ENCODE measurements at regions of chr11 and their contacts with region 1.

Region 1: GRCh38 chr11:1694064-1694845 is 2.7 kb upstream of the KRTAP5-6 start:
- DNase-seq: peak; percentile 86 to 93
- H3K4me3 ChIP-seq: peak overlapping the region; percentile 49
- H3K4me3 Mint-ChIP-seq: peak overlapping the region; percentile 83
- H3K27ac Mint-ChIP-seq: peak overlapping the region; percentile 91
- H3K4me1 ChIP-seq: peaks cover 44% of the 10 kb centered on the region
- H3K4me1 Mint-ChIP-seq: peaks cover 34% of the 10 kb centered on the region
- H3K27me3 ChIP-seq: no peaks in the 10 kb centered on the region
- H3K27me3 Mint-ChIP-seq: no peaks in the 10 kb centered on the region
- CTCF ChIP-seq: peak; percentile 93 to 95

Region 2: GRCh38 chr11:1256257-1257045 is 437.8 kb before region 1 on chr11:
- CTCF ChIA-PET with region 1: no interaction called
- POLR2A ChIA-PET with region 1: no interaction called
- intact Hi-C with region 1: no loop called
- DNase-seq: no peak
- H3K4me3 ChIP-seq: no peak overlapping the region
- H3K4me3 Mint-ChIP-seq: no peak overlapping the region
- H3K27ac Mint-ChIP-seq: no peak overlapping the region
- H3K4me1 ChIP-seq: no peaks in the 10 kb centered on the region; the same call in 1 of the 2 replicates
- H3K4me1 Mint-ChIP-seq: no peaks in the 10 kb centered on the region
- H3K27me3 ChIP-seq: no peaks in the 10 kb centered on the region
- H3K27me3 Mint-ChIP-seq: no peaks in the 10 kb centered on the region
- CTCF ChIP-seq: no peak

Region 3: DNA sequence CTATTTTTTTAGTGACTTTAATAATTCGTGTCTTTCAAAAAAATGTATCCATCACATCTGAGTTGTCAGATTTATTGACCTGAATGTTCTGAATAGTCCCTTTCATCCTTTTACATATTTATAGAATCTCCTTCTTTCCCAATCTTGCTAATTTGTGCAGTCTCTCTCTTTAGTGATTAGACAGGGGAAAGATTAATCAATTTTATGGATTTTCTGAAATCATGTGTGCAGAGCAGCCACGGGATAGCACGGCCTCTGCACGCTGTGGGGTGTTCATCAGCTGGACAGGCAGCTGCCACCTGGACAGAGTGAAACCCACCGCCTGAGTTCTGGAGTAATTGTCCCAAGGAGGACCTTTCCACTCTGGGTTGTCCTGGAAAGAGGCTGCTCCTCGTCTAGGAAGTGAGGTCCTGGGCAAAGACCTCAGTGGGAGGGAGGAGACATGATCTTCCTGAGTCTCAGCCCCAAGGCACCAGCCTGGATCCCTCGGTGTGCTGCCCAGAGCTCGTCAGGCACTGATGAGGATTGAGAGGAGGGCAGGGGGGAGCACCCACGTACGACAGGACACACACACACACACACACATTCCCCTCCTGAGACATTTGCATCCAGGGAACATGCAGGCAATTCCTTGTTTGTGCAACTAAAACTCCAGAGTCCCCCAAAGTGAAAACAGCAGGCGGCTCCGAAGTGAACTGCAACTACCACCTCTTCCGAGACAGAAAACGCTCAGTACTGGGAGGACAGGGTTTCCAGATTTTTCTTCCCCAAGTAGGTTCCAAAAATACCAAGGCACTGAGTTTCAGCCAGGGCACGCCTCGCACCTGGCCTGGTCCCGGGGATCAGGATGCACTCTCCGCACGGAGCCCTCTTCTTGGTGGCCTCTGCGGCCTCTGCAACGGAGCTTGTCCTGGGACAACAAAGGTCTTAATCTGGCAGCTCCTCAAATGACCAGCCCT is 19.8 kb before region 1 on chr11:
- CTCF ChIA-PET with region 1: interaction called, 7 read pairs
- POLR2A ChIA-PET with region 1: no interaction called
- intact Hi-C with region 1: loop called (anchors 1 kb)
- DNase-seq: peak; percentile 52 to 72
- H3K4me3 ChIP-seq: no peak overlapping the region
- H3K4me3 Mint-ChIP-seq: peak overlapping the region; percentile 35
- H3K27ac Mint-ChIP-seq: peak overlapping the region; percentile 75
- H3K4me1 ChIP-seq: peaks cover 42% of the 10 kb centered on the region
- H3K4me1 Mint-ChIP-seq: peaks cover 38% of the 10 kb centered on the region
- H3K27me3 ChIP-seq: no peaks in the 10 kb centered on the region
- H3K27me3 Mint-ChIP-seq: no peaks in the 10 kb centered on the region
- CTCF ChIP-seq: no peak

Region 4: GRCh38 chr11:1832211-1832919 is 138.1 kb after region 1 on chr11:
- CTCF ChIA-PET with region 1: interaction called, 52 read pairs
- POLR2A ChIA-PET with region 1: interaction called, 6 read pairs
- intact Hi-C with region 1: loop called (anchors 1 kb)
- DNase-seq: peak in 1 of 2 experiments; percentile 70
- H3K4me3 ChIP-seq: no peak overlapping the region
- H3K4me3 Mint-ChIP-seq: peak overlapping the region; percentile 33
- H3K27ac Mint-ChIP-seq: peak overlapping the region; percentile 98
- H3K4me1 ChIP-seq: peaks cover 78% of the 10 kb centered on the region
- H3K4me1 Mint-ChIP-seq: peaks cover 50% of the 10 kb centered on the region
- H3K27me3 ChIP-seq: no peaks in the 10 kb centered on the region
- H3K27me3 Mint-ChIP-seq: no peaks in the 10 kb centered on the region
- CTCF ChIP-seq: peak; percentile 80 to 95

Region 5: GRCh38 chr11:1882519-1883238 is 188.4 kb after region 1 on chr11:
- CTCF ChIA-PET with region 1: interaction called, 9 read pairs
- POLR2A ChIA-PET with region 1: no interaction called
- intact Hi-C with region 1: loop called (anchors 1 kb)
- DNase-seq: peak; percentile 76 to 87
- H3K4me3 ChIP-seq: no peak overlapping the region
- H3K4me3 Mint-ChIP-seq: no peak overlapping the region
- H3K27ac Mint-ChIP-seq: no peak overlapping the region
- H3K4me1 ChIP-seq: peaks cover 8% of the 10 kb centered on the region
- H3K4me1 Mint-ChIP-seq: no peaks in the 10 kb centered on the region
- H3K27me3 ChIP-seq: no peaks in the 10 kb centered on the region
- H3K27me3 Mint-ChIP-seq: no peaks in the 10 kb centered on the region
- CTCF ChIP-seq: peak; percentile 89 to 95

Region 6: GRCh38 chr11:1908618-1909017 is 214.4 kb after region 1 on chr11:
- CTCF ChIA-PET with region 1: no interaction called
- POLR2A ChIA-PET with region 1: no interaction called
- intact Hi-C with region 1: no loop called
- DNase-seq: no peak
- H3K4me3 ChIP-seq: no peak overlapping the region
- H3K4me3 Mint-ChIP-seq: no peak overlapping the region
- H3K27ac Mint-ChIP-seq: no peak overlapping the region
- H3K4me1 ChIP-seq: no peaks in the 10 kb centered on the region
- H3K4me1 Mint-ChIP-seq: peaks cover 6% of the 10 kb centered on the region
- H3K27me3 ChIP-seq: no peaks in the 10 kb centered on the region
- H3K27me3 Mint-ChIP-seq: no peaks in the 10 kb centered on the region
- CTCF ChIP-seq: no peak

Region 7: GRCh38 chr11:1946812-1947484 is 252.7 kb after region 1 on chr11 and contains the start of gene MRPL23:
- CTCF ChIA-PET with region 1: interaction called, 12 read pairs
- POLR2A ChIA-PET with region 1: interaction called, 11 read pairs
- intact Hi-C with region 1: no loop called
- DNase-seq: no peak
- H3K4me3 ChIP-seq: no peak within 1 kb of the TSS
- H3K4me3 Mint-ChIP-seq: no peak within 1 kb of the TSS
- H3K27ac Mint-ChIP-seq: no peak within 1 kb of the TSS
- H3K4me1 ChIP-seq: no peaks in the 10 kb centered on the region
- H3K4me1 Mint-ChIP-seq: no peaks in the 10 kb centered on the region
- H3K27me3 ChIP-seq: no peaks in the 10 kb centered on the region
- H3K27me3 Mint-ChIP-seq: no peaks in the 10 kb centered on the region
- CTCF ChIP-seq: no peak
- total RNA-seq, gene MRPL23: 7.8 and 15.0 TPM in 2 replicates